ENCODE measurements at regions of chr15 and their contacts with region 1.

Region 1: DNA sequence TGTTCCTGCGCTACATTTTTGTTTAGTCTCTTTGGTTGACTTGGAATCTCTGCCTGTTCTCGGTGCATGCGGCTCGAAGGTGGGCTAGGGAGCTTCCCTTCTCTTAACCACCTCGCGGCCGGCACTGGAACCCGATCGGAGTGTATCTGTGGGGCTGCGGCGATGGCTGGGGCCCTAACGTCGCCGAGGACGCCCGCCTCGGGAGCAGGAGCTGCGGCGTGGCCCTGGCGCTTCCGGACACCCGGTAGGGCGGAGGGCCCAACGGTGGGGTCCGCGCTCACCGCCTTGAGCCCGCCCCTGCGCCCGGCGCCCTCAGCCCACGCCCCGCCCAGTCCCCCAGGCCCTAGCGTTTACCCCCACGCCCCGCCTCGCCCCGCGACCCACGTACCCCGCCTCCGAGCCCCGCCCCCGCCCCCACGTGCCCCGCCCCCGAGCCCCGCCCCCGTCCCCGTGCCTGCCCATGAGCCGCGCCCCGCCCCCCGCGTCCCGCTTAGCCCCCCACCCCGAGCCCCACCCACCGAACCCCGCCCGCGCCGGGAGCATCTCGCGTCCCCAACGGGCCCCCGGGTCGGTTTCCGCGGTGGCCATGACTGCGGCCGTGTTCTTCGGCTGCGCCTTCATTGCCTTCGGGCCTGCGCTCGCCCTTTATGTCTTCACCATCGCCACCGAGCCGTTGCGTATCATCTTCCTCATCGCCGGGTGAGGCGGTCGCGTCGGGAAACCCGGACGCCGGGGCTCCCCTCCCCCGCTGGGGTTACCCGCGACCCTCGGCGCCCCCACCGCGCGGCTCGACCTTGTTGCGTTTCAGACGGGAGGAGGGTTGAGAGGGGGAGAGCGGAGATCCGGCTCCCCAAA is at the start of gene APH1B:
- DNase-seq: peak; percentile 81
- H3K4me3 ChIP-seq: peak within 1 kb of the TSS; percentile 77
- H3K27ac ChIP-seq: peak within 1 kb of the TSS; percentile 80
- H3K4me1 ChIP-seq: peaks cover 3% of the 10 kb centered on the region
- H3K27me3 ChIP-seq: no peaks in the 10 kb centered on the region
- CTCF ChIP-seq: no peak
- total RNA-seq, gene APH1B: 5.0 to 8.9 TPM

Region 2: DNA sequence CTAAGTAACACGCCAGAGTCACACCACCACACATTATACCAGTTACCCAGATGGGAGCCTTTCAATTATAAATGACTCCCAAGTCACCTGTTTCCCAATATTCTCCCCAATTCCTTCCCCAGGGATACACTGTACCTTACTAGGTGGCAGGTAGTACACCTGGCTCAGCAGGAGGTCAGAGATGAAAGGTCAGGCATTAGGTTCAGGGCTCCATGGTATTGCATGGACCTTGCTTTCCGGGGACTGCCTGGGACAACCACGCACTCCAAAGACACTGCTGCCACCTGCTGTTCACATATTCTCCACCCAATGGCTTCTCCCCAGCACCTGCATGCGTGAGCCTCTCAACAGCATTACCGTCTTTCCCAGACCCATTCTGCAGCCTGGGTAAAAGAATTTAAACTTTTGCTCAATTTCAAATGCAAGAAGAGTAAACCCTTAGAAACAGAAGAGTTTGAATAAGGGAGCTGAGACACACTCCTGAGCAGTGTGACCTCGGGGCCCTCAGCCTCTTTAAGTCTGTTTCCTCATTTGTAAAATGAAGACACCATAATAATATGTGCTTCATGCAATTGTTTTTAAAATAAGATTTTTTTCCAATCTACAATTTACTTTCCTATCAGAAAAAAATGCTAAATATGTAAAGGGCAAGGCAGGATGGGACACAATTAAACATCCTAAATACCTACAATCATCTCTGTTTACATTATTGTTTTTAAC is 183.6 kb before region 1 on chr15:
- intact Hi-C with region 1: no loop called
- DNase-seq: peak; percentile 92
- H3K4me3 ChIP-seq: no peak overlapping the region
- H3K27ac ChIP-seq: no peak overlapping the region
- H3K4me1 ChIP-seq: no peaks in the 10 kb centered on the region
- H3K27me3 ChIP-seq: no peaks in the 10 kb centered on the region
- CTCF ChIP-seq: peak; percentile 80

Region 3: DNA sequence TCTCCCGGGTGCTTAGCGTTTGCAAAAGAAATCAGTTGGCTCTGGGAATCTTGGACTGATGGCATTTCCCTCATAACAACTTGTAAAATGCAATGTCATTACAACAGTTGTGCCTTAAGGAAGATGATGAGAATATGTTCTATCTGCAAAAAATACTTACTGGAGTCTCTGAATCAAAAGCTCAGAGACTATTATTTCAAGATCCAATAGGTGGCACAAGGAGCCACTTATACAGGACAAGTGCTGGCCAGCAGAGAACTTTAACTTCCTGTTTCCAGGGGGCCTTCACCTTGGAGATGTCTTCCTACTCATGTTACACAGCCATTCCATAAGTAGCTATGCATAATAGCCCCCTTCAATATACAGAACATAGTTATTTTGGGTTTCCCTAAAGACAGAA is 111.0 kb before region 1 on chr15:
- intact Hi-C with region 1: loop called (anchors 10 kb)
- DNase-seq: no peak
- H3K4me3 ChIP-seq: no peak overlapping the region
- H3K27ac ChIP-seq: no peak overlapping the region
- H3K4me1 ChIP-seq: no peaks in the 10 kb centered on the region
- H3K27me3 ChIP-seq: no peaks in the 10 kb centered on the region
- CTCF ChIP-seq: no peak

Region 4: DNA sequence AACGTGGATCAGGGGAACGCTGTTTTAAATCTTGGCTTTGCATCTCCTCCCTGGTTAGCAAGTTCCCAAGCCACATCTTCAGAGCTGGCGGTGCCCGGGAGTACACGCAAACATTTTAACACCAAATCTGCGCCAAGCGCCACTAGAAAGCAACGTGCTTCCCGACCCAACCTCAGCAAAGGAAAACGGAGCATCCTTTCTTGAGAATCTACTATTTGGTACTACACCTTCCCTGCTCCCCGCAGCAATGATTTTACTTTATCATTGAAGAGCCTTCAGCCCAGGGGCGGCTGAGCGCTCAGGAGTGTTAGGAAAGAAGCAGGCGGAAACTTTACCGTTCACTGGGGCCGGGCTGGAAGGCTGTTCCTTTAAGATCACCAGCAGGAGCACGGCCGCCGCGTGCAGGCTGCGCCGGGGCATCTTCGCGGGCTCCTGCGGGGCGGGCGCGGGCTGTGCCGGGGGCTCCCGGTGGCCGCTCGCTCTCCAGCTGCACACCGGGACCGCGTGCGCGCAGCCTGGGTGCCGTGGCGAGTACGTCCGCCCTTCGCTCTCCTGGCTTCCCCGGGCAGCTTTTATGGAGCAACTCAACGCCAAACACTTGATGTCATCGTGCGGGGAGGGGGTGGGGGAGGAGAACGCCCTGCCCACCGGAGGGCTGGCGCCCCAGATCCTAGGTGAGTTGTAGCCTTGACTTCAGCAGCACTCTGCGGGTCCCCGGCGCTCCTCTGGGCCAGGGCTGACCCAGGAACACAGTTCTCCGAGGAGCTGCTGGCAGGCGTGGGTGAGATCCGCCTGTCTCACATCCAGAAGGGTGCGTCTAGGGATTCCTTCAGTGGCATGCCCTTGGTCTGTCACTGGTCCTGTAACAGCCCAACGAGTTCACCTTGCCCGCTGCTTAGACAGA is 104.3 kb after region 1 on chr15 and contains the start of gene CA12:
- intact Hi-C with region 1: no loop called
- DNase-seq: peak; percentile 86
- H3K4me3 ChIP-seq: peak within 1 kb of the TSS; percentile 65
- H3K27ac ChIP-seq: peak within 1 kb of the TSS; percentile 56
- H3K4me1 ChIP-seq: no peaks in the 10 kb centered on the region
- H3K27me3 ChIP-seq: no peaks in the 10 kb centered on the region
- CTCF ChIP-seq: no peak
- total RNA-seq, gene CA12: 290 to 339 TPM